OCI-LY7 (cell line): ENCODE measurements at regions of chr18 and their contacts with region 1.

Region 1: DNA sequence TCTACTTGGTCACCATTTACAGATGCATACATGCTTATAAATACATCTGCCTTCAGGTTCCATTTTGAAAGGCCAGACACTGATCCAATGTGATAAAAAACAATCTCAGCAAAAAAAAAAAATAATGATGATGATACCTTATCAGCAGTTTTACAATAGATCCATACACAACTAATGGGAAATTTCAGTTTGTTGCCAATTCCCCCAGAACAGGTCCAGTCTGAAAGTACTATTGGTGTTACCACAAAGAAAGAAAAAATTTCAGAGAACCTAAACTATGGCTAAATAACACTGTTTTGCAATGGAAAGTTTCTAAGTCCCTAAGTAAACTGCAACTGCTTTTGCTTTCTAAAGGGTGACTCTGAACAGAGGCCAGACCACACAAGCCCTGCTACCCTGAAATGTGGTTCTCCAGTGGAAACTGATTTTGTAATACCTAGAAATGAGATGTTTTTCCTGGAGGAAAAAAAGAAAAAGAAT is 54.1 kb downstream of the LPIN2 start:
- DNase-seq: peak; percentile 41
- H3K4me3 ChIP-seq: peak overlapping the region; percentile 62
- H3K27ac ChIP-seq: peak overlapping the region; percentile 93
- H3K4me1 ChIP-seq: peaks cover 74% of the 10 kb centered on the region
- CTCF ChIP-seq: no peak

Region 2: DNA sequence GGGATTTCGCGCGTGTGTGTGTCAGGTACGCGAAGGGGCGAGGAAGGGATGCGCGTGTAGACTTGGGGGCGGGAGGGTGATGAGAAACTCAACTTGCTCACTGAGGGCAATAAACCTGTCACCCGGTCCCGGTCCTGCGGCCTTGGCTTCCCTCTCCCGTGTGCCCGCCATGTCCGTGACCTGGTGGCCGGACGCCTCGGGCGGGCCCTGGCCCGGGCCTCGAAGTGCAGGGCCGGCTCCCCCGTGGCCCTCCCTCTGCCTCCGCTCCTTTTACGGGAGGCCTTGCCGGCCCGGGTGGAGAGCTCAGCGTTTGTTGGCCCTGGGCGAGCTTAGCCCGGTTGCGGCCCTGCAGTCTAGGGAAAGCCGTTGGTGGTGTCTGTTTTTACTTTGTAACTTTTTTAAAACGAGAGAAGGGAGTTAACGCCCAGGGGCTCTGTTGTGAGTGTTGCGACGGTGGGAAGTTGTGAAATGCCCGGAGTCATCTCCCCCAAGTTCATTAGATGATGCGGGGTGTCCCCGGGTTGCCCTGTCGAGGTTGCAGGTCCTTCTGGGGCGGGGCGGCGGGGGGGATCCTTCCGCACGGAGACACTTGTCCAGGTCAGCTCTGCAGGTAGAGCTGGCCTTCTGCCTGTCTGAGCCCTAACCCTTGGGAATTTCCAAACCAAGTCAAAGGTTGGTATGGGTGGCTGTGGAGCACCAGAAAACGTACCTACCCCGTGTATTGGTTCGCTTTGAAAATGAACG is 302.4 kb before region 1 on chr18:
- CTCF ChIA-PET with region 1: no interaction called
- POLR2A ChIA-PET with region 1: no interaction called
- intact Hi-C with region 1: no loop called
- DNase-seq: peak; percentile 55
- H3K4me3 ChIP-seq: peak overlapping the region; percentile 97
- H3K27ac ChIP-seq: peak overlapping the region; percentile 88
- H3K4me1 ChIP-seq: peaks cover 35% of the 10 kb centered on the region
- CTCF ChIP-seq: no peak

Region 3: DNA sequence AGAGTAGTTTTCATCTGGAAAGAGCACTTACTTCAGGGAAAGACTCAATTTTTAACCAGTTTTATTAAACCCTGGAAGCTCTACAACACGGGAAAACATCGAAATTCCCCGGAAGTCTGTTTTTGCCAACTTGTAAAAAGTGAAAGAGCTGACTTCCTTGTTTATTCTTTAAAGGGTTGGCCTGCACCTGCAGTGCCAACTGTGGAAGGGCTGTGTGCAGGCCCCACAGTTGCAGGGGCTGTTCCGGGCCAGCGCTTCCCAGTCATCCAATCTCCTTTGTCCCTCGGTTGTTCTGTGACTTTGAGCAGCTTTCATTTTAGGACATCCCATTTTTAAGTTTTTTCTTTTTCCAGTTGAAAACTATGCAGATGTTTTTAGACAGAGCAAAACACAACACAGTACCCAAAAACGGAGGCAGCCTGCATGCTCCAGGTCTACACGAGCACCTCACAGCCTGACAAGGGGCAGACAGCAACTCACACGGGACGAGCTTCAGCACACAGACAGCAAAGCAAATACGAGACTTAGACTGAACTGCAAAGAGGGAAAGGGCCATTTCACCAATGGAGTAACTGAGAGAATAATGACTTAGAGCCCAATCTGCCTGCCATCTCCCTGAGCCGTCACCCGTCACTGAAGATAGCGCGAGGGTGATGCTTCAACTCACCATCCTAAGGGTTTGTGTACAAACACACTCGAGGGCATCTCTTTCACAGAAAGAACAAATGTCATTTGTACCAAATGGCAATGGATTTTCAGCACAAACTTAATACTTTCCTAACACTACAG is 41.4 kb before region 1 on chr18:
- CTCF ChIA-PET with region 1: interaction called, 3 read pairs
- POLR2A ChIA-PET with region 1: interaction called, 3 read pairs
- intact Hi-C with region 1: loop called (anchors 1 kb)
- DNase-seq: peak; percentile 90
- H3K4me3 ChIP-seq: peak overlapping the region; percentile 51
- H3K27ac ChIP-seq: peak overlapping the region; percentile 92
- H3K4me1 ChIP-seq: peaks cover 31% of the 10 kb centered on the region
- CTCF ChIP-seq: no peak

Region 4: GRCh38 chr18:2971741-2972552 is 13.1 kb after region 1 on chr18:
- CTCF ChIA-PET with region 1: no interaction called
- POLR2A ChIA-PET with region 1: interaction called, 158 read pairs
- intact Hi-C with region 1: no loop called
- DNase-seq: peak; percentile 45
- H3K4me3 ChIP-seq: no peak overlapping the region
- H3K27ac ChIP-seq: no peak overlapping the region
- H3K4me1 ChIP-seq: peaks cover 25% of the 10 kb centered on the region
- CTCF ChIP-seq: no peak

Region 5: DNA sequence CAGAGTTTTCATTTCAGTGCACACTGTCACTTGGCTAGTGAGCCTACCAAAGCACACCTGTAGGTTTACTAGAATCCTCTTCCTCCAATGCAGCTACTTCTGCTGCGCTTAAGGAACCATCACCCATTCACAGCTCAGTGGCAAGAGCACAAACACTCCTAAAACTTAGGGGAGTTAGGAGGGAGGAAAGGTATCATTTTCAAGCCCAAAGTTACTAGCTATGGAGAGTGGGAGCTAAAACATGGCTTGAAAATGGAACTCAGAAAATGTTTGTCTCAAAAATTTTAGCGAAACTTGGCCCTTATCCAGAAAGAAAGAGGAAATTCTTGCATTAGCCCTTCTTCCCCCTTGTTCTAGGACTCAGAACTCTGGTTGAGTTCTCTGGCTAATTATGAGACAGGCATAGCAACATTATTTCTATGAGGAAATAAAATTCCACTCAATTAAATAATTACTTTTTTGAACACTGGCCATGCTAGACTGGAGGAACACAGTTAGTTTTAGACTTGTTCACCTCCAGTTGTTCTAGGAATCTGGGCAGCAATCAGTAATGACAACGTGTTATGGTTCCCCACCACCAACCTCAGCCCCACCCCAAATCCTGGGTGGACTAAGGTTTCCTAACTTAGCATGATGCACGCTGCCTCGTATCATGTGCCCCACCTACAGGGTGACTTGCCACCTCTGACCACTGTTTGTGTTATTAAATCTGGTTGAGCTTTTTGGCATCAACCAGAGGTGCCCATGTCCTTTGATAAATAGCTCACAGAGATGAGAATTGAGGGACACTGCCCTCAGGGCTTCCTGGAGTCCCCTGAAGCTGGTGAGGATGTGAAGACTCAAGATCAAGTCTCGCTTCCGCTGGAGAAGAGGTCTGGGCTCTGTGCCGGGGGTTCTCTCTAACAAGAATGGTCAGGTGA is 21.3 kb after region 1 on chr18:
- CTCF ChIA-PET with region 1: interaction called, 3 read pairs
- POLR2A ChIA-PET with region 1: interaction called, 158 read pairs
- intact Hi-C with region 1: loop called (anchors 1 kb)
- DNase-seq: peak; percentile 72
- H3K4me3 ChIP-seq: peak overlapping the region; percentile 12
- H3K27ac ChIP-seq: peak overlapping the region; percentile 62
- H3K4me1 ChIP-seq: peaks cover 68% of the 10 kb centered on the region
- CTCF ChIP-seq: no peak

Region 6: DNA sequence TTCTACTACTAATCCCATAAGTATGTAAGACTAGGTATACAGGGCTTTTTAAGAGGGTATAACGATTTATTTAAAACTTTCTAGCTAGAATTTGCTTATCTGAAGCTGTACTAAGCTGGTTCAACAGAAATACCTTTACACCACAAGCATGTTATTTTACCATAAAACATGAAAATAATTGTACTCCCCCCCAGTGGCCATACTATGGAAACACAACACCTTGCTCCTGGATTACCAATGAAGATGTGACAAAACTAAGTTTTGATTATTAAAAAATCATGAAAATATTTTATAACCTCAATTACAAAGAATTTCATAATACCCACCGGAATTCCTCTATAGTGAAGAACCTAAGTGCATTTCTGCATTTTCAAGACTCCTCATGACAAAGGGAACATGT is 26.8 kb after region 1 on chr18:
- CTCF ChIA-PET with region 1: interaction called, 3 read pairs
- POLR2A ChIA-PET with region 1: interaction called, 158 read pairs
- intact Hi-C with region 1: loop called (anchors 1 kb)
- DNase-seq: peak; percentile 71
- H3K4me3 ChIP-seq: no peak overlapping the region
- H3K27ac ChIP-seq: no peak overlapping the region
- H3K4me1 ChIP-seq: peaks cover 48% of the 10 kb centered on the region
- CTCF ChIP-seq: peak; percentile 94